Endothelial cell of umbilical vein (primary cell): ENCODE measurements at regions of chr11 and their contacts with region 1.

Region 1: DNA sequence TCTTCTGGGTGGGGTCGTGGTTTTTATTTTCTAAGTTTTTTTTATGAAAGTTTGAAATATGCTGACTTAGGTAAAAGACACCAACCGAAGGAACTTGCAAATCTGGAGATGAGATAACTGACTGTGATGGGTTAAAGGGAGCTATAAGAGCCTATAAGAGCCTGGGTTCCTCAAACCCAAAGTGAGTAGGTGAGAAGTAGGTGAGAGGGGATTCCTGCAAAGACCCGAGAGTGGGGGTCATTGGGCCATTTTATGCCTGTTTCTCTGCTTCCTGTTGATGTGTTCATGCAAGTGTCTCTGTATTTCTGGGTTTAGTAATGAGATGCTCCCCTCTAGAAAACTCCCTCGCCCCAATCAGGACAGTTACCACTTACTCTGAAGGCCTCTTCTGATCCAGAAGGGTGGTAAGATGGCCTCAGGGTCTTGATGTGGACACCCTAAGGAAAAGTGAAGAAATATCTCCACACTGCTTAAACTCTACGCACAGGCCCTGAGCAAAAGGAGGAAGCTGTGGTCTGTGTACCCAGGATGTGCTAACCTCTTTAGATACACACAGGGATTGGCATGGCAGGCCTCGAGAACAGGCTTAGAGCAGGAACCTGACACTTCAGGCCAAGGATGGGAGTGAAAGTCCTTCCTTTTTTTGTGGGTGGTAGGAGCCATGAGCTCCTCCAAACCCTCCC is 1.8 kb downstream of the FLI1 start:
- DNase-seq: no peak
- H3K4me3 ChIP-seq: peak overlapping the region; percentile 56 to 94 (median 92)
- H3K27ac ChIP-seq: peak overlapping the region; percentile 98
- H3K4me1 ChIP-seq: peaks cover 66% of the 10 kb centered on the region
- H3K27me3 ChIP-seq: no peaks in the 10 kb centered on the region
- CTCF ChIP-seq: no peak
- POLR2A ChIP-seq: peak; percentile 35

Region 2: DNA sequence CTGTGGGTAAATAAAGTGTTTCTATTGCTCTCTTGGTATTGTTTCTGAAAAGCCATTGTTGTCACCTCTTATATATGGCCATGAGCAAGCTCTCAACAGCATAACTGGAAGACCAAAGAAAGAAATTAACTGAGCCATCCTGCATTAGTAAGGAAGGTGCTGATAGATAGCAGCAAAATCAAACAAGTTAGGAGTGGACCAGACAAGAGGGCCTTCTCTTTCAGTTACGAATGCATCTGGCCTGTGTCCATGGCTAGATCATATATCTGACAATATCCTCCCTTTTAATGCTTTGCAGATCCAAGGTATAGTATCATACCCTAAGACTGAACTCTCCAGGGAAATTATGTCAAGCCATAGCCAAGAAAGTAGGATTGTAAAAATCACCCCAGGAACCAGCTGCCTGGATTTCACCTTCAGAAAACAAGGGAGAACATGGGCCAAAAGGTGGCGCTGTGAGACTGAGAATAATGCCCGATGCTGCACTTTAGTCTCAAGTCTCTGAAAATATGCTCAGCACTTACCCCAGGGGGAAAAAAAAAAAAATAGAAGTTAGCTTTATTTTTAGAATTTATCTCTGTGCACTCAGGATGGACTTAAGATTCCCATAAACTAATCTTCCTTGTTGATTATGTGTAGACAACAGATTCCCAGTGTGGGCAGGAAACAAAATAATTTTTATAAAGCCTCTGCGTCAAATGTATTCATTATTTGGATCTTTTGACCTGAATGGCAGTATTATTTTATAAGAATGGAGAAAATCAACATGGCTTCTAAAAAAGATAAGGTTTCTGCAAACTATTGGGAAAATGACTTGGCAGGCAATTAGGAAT is 523.4 kb before region 1 on chr11:
- CTCF ChIA-PET with region 1: interaction called, 13 read pairs
- POLR2A ChIA-PET with region 1: interaction called, 9 read pairs
- dilution Hi-C with region 1: no loop called
- intact Hi-C with region 1: loop called (anchors 1 kb)
- DNase-seq: peak; percentile 91
- H3K4me3 ChIP-seq: no peak overlapping the region
- H3K27ac ChIP-seq: peak overlapping the region; percentile 42
- H3K4me1 ChIP-seq: peaks cover 9% of the 10 kb centered on the region
- H3K27me3 ChIP-seq: no peaks in the 10 kb centered on the region
- CTCF ChIP-seq: peak; percentile 64 to 74
- POLR2A ChIP-seq: no peak

Region 3: GRCh38 chr11:128336203-128336602 is 359.5 kb before region 1 on chr11:
- CTCF ChIA-PET with region 1: no interaction called
- POLR2A ChIA-PET with region 1: no interaction called
- dilution Hi-C with region 1: no loop called
- intact Hi-C with region 1: loop called (anchors 2 kb)
- DNase-seq: peak; percentile 88
- H3K4me3 ChIP-seq: no peak overlapping the region
- H3K27ac ChIP-seq: peak overlapping the region; percentile 87
- H3K4me1 ChIP-seq: peaks cover 43% of the 10 kb centered on the region
- H3K27me3 ChIP-seq: no peaks in the 10 kb centered on the region
- CTCF ChIP-seq: no peak
- POLR2A ChIP-seq: peak; percentile 17

Region 4: DNA sequence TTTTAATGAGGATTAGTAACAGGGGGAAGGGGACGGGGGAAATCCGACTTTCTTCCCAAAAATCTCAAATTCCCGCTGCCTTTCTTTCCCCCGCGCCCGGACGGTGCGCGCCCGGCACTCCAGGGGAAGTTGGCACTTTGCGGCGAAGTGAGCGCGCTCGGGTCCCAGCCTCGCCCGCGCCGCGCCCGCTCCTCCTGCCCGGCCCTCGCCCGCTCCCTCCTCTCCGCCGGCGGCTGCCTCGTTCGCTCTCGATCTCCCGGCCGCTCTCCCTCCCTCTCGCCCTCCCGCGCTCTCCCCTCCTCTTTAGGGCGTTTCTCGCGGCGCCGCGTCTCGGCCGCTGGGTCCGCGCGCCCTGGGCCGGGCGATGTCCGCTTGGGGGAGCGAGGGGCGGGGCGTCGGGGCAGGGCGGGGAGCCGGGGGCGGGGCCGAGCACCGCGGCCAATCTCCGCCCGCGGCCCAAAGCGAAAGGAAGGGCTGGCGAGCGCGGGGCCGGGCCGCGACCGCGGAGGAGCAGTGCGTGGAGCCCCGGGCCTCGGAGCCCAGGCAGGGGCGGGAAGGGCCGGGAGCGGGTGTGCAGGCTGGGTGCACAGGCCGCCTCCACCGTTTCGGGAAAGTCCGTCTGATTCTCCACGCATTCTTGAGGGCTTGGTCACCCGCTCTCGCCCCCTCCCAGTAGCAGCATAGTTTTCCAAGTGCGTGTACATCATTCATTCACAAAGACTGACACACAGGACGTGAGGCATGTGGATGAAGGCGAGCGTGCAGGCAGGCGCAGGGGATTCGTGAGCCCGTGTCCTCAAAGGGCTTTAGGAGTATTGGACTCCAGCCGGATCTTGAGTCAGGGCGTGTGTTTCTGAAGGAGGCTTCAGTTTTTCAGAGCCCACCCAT is 173.4 kb before region 1 on chr11:
- CTCF ChIA-PET with region 1: no interaction called
- POLR2A ChIA-PET with region 1: interaction called, 3 read pairs
- dilution Hi-C with region 1: no loop called
- intact Hi-C with region 1: loop called (anchors 1 kb)
- DNase-seq: peak; percentile 97
- H3K4me3 ChIP-seq: peak overlapping the region; percentile 68 to 98 (median 97)
- H3K27ac ChIP-seq: peak overlapping the region; percentile 99
- H3K4me1 ChIP-seq: peaks cover 52% of the 10 kb centered on the region
- H3K27me3 ChIP-seq: no peaks in the 10 kb centered on the region
- CTCF ChIP-seq: no peak
- POLR2A ChIP-seq: peak; percentile 69

Region 5: GRCh38 chr11:128714881-128715280 is 19.2 kb after region 1 on chr11:
- CTCF ChIA-PET with region 1: interaction called, 4 read pairs
- POLR2A ChIA-PET with region 1: interaction called, 22 read pairs
- dilution Hi-C with region 1: no loop called
- intact Hi-C with region 1: loop called (anchors 1 kb)
- DNase-seq: peak; percentile 70
- H3K4me3 ChIP-seq: no peak overlapping the region
- H3K27ac ChIP-seq: peak overlapping the region; percentile 98
- H3K4me1 ChIP-seq: peaks cover 95% of the 10 kb centered on the region
- H3K27me3 ChIP-seq: no peaks in the 10 kb centered on the region
- CTCF ChIP-seq: no peak
- POLR2A ChIP-seq: no peak

Region 6: GRCh38 chr11:128733440-128734102 is 37.9 kb after region 1 on chr11:
- CTCF ChIA-PET with region 1: no interaction called
- POLR2A ChIA-PET with region 1: interaction called, 11 read pairs
- dilution Hi-C with region 1: no loop called
- intact Hi-C with region 1: no loop called
- DNase-seq: peak; percentile 37
- H3K4me3 ChIP-seq: no peak overlapping the region
- H3K27ac ChIP-seq: no peak overlapping the region
- H3K4me1 ChIP-seq: peaks cover 48% of the 10 kb centered on the region
- H3K27me3 ChIP-seq: no peaks in the 10 kb centered on the region
- CTCF ChIP-seq: no peak
- POLR2A ChIP-seq: no peak

Region 7: GRCh38 chr11:128824191-128825049 is 128.7 kb after region 1 on chr11:
- CTCF ChIA-PET with region 1: no interaction called
- POLR2A ChIA-PET with region 1: no interaction called
- dilution Hi-C with region 1: no loop called
- intact Hi-C with region 1: no loop called
- DNase-seq: no peak
- H3K4me3 ChIP-seq: no peak overlapping the region
- H3K27ac ChIP-seq: no peak overlapping the region
- H3K4me1 ChIP-seq: peaks cover 36% of the 10 kb centered on the region
- H3K27me3 ChIP-seq: no peaks in the 10 kb centered on the region
- CTCF ChIP-seq: no peak
- POLR2A ChIP-seq: no peak